Ovary (tissue), 10 donors: ENCODE measurements at regions of chr2 and their contacts with region 1.

Region 1: DNA sequence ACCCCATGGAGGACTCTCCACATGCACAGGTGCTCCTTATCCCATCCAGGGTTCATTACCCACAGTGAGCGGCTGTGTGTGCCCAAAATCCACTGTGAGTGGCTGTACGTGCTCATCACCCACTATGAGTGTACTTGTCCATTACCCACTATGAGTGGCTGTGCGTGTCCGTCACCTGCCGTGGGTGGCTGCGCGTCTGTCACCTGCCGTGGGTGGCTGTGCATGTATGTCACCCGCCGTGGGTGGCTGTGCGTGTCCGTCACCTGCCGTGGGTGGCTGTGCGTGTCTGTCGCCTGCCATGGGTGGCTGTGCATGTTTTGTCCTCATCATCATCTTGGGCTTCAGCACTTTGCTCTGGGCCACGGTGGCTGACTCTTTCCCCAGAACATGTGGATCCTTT is 78.6 kb upstream of the FN1 start:
- DNase-seq: no peak
- H3K4me3 ChIP-seq: no peak overlapping the region
- H3K27ac ChIP-seq: no peak overlapping the region
- H3K4me1 ChIP-seq: no peaks in the 10 kb centered on the region
- H3K27me3 ChIP-seq: no peaks in the 10 kb centered on the region
- CTCF ChIP-seq: no peak
- EP300 ChIP-seq: no peak
- POLR2A ChIP-seq: no peak

Region 2: GRCh38 chr2:216866515-216867095 is 1352.1 kb after region 1 on chr2:
- intact Hi-C with region 1: loop called in 1 of 4 experiments (anchors 5 kb)
- DNase-seq: no peak
- H3K4me3 ChIP-seq: no peak overlapping the region
- H3K27ac ChIP-seq: no peak overlapping the region
- H3K4me1 ChIP-seq: peaks cover 2% of the 10 kb centered on the region
- H3K27me3 ChIP-seq: no peaks in the 10 kb centered on the region
- CTCF ChIP-seq: no peak
- EP300 ChIP-seq: no peak
- POLR2A ChIP-seq: no peak